ENCODE measurements at regions of chr4 and their contacts with region 1.

Region 1: DNA sequence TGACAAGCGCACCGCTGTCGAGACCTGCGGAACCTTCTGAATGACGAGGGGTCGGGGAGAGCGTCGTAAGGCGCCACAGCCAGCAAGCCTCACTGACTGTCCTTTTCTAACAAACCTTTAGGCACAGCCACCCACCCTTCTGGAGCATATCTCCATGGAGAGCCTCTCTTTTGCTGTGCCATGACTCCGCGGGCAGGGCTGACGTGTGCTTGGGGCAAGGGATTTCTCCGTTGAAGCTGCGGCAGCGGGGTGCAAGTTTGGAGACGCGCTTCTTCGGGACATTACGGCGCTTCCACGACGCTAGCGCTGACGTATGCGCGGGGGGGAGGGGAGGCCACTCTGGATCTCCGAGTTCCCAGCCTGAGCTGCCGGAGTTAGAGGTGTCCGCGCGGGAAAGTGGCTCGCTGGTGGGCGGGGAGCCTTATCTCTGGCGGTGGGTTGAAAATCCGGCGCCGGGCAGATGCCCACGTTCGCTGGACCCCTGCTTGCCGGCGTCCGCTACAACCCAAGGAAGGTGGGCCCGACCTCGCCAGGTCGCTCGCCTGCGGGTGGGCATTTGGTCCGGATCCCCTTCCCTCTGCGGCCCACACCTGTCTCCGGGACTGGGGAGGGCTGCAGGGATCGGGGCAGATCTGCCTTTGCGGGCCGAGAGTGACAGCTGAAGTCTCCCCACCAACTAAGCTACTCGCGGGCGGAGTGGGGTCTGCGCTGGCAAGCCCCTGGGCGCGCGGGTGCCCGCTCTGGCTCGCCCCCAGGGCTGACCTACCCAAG is 543 bp upstream of the SLC10A7 start:
- DNase-seq: peak; percentile 75
- ATAC-seq: peak; percentile 80
- H3K4me3 Mint-ChIP-seq: no peak overlapping the region
- H3K27ac Mint-ChIP-seq: no peak overlapping the region
- H3K4me1 Mint-ChIP-seq: peaks cover 21% of the 10 kb centered on the region
- H3K27me3 Mint-ChIP-seq: no peaks in the 10 kb centered on the region
- CTCF ChIP-seq: no peak

Region 2: DNA sequence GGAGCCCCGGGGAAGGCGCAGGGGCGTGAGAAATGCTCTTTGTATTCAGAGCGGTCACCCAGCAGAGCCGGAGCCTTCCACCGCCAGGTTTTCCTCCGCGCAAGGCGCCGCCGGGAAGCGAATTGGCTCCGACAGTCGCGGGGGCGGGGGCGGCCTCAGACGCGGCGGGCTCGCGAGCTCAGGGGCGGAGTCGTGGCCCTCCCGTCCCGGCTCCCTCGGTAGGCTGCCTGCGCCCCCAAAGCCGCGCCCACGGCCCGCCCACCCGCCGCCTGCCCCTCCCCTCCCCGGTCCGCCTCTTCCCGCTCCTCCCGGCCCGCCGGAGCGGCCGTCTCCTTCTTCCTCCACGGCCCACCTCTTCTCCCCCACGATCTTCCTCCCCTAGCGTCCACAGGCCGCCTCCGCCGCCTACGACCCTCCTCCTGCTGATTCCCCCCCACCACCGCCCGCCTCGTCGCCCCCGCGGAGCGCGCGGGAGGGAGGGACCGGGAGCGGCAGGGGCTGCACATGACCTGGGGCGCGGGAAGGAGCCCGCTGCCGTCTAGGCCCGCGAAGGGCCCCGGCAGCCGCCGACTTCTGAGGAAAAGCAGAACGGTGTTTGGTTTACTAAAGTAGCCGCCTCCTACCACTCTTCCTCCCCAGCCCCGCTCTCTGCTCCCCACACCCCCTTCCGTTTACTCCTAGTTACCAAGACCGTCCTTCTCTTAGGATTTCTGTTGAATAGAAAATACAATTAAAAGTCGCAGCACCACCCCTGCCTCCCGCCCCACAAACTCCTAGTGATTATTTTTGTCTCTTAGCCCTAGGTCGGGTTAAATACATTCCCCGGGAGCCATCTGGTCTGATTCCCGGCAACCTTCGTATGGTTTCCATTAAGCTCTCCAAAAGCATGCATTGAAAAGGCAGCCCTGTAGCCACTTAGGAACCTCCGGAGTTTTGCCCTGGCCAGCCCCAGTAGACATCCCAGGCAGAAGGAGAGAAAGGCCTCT is 789.1 kb before region 1 on chr4:
- CTCF ChIA-PET with region 1: no interaction called
- POLR2A ChIA-PET with region 1: no interaction called
- intact Hi-C with region 1: loop called (anchors 5 kb)
- DNase-seq: peak; percentile 72
- ATAC-seq: peak; percentile 97
- H3K4me3 Mint-ChIP-seq: peak overlapping the region; percentile 85
- H3K27ac Mint-ChIP-seq: no peak overlapping the region
- H3K4me1 Mint-ChIP-seq: peaks cover 11% of the 10 kb centered on the region
- H3K27me3 Mint-ChIP-seq: peaks cover 10% of the 10 kb centered on the region
- CTCF ChIP-seq: no peak

Region 3: GRCh38 chr4:146458594-146458993 is 63.7 kb before region 1 on chr4:
- CTCF ChIA-PET with region 1: no interaction called
- POLR2A ChIA-PET with region 1: no interaction called
- intact Hi-C with region 1: loop called (anchors 2 kb)
- DNase-seq: no peak
- ATAC-seq: peak; percentile 94
- H3K4me3 Mint-ChIP-seq: no peak overlapping the region
- H3K27ac Mint-ChIP-seq: peak overlapping the region; percentile 86
- H3K4me1 Mint-ChIP-seq: peaks cover 7% of the 10 kb centered on the region
- H3K27me3 Mint-ChIP-seq: no peaks in the 10 kb centered on the region
- CTCF ChIP-seq: no peak

Region 4: DNA sequence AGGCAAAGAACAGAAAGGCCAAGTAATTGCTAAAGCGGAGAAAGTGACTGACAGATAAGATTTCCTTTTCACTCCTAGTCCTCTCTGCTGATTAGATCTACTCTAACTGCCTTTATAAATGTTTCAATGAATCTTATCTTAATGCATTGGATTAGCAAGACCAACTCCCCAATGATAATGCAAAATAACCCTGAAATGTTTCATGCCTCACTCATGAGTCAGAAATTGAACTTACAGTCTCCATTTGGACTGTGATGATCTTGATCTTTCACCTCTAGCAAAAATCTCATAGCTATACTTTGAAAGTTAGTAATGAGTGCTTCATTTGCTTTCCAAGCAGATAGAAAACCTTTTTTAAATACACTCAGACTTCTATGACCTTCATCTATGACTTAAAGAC is 27.0 kb before region 1 on chr4:
- CTCF ChIA-PET with region 1: no interaction called
- POLR2A ChIA-PET with region 1: no interaction called
- intact Hi-C with region 1: no loop called
- DNase-seq: no peak
- ATAC-seq: no peak
- H3K4me3 Mint-ChIP-seq: no peak overlapping the region
- H3K27ac Mint-ChIP-seq: no peak overlapping the region
- H3K4me1 Mint-ChIP-seq: no peaks in the 10 kb centered on the region
- H3K27me3 Mint-ChIP-seq: no peaks in the 10 kb centered on the region
- CTCF ChIP-seq: no peak

Region 5: GRCh38 chr4:147056940-147057610 is 534.8 kb after region 1 on chr4:
- CTCF ChIA-PET with region 1: no interaction called
- POLR2A ChIA-PET with region 1: no interaction called
- intact Hi-C with region 1: loop called (anchors 1 kb)
- DNase-seq: no peak
- ATAC-seq: no peak
- H3K4me3 Mint-ChIP-seq: peak overlapping the region; percentile 83
- H3K27ac Mint-ChIP-seq: peak overlapping the region; percentile 85
- H3K4me1 Mint-ChIP-seq: peaks cover 25% of the 10 kb centered on the region
- H3K27me3 Mint-ChIP-seq: peaks cover 8% of the 10 kb centered on the region
- CTCF ChIP-seq: no peak

Region 6: DNA sequence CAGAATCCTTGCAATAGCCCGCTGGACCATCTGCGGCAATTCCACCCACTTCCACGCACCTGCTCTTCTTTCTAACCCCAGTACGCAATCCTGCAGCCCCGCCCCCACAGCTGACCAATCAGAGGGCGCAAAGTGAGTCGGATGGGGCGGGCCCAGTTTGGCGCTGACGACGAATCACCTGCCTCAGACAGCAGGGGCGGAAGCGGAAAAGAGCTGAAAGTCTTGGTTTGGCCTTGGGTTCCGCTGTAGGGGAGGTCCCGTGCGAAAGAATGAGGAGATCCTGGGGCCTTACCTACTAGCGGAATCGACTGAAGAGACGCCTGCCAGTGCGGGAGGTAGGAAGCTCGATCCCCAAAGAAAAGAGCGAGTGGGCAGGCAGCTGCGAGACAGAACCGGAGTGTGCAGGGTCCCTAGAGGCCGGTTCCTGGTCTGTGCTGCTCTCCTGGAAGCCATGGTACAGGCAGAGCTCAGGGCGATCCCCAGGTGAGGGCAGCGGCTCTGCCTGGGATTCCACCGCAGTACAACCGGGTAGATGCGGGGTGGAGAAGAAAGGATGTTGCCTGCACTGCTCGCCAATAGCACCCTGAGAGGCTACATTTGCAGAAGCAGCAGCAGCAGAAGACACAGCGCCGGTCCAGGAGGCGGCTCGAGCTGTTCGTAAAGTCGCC is 1095.0 kb after region 1 on chr4 and contains the start of gene TMEM184C:
- CTCF ChIA-PET with region 1: no interaction called
- POLR2A ChIA-PET with region 1: no interaction called
- intact Hi-C with region 1: loop called (anchors 10 kb)
- DNase-seq: peak; percentile 97
- ATAC-seq: peak; percentile 97
- H3K4me3 Mint-ChIP-seq: peak within 1 kb of the TSS; percentile 98
- H3K27ac Mint-ChIP-seq: peak within 1 kb of the TSS; percentile 96
- H3K4me1 Mint-ChIP-seq: peaks cover 44% of the 10 kb centered on the region
- H3K27me3 Mint-ChIP-seq: peaks cover 2% of the 10 kb centered on the region
- CTCF ChIP-seq: no peak
- total RNA-seq, gene TMEM184C: 25.0 and 27.9 TPM in 2 replicates